Dorsolateral prefrontal cortex (tissue), 120 donors: ENCODE measurements at regions of chr19 and their contacts with region 1.

Region 1: GRCh38 chr19:48780631-48781391 is 25.5 kb downstream of the FGF21 start:
- DNase-seq: no peak
- H3K4me3 ChIP-seq: no peak overlapping the region
- H3K27ac ChIP-seq: peak overlapping the region in 15 of 59 donors; percentile 9 to 72 (median 47)
- H3K27me3 ChIP-seq: no peaks in the 10 kb centered on the region
- CTCF ChIP-seq: no peak

Region 2: DNA sequence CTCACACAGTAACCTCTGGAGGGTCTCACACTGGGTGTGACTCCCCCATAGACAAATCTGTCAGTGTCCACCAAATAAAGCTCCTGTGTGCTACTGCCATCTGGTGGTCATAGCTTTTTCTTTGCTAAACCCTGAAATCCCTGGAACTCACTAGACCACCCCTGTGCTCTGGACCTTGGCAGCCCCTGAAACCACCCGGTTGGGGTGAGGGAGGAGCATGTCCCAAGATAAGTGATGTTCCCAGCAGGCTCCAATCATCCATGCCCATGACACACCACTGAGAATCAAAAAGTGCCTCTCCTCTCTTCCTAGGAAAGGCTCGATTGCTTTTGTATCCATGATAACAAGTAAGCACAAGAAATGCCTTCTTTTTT is 62.0 kb after region 1 on chr19:
- intact Hi-C with region 1: loop called in 1 of 2 experiments (anchors 2 kb)
- DNase-seq: peak in 3 of 10 donors; percentile 38 to 56 (median 39)
- H3K4me3 ChIP-seq: no peak overlapping the region
- H3K27ac ChIP-seq: peak overlapping the region in 2 of 59 donors; percentile 18 to 27
- H3K27me3 ChIP-seq: no peaks in the 10 kb centered on the region
- CTCF ChIP-seq: peak; percentile 62 to 94 (median 86)